Tibial artery (tissue), 4 donors: ENCODE measurements at regions of chr2 and their contacts with region 1.

Region 1: DNA sequence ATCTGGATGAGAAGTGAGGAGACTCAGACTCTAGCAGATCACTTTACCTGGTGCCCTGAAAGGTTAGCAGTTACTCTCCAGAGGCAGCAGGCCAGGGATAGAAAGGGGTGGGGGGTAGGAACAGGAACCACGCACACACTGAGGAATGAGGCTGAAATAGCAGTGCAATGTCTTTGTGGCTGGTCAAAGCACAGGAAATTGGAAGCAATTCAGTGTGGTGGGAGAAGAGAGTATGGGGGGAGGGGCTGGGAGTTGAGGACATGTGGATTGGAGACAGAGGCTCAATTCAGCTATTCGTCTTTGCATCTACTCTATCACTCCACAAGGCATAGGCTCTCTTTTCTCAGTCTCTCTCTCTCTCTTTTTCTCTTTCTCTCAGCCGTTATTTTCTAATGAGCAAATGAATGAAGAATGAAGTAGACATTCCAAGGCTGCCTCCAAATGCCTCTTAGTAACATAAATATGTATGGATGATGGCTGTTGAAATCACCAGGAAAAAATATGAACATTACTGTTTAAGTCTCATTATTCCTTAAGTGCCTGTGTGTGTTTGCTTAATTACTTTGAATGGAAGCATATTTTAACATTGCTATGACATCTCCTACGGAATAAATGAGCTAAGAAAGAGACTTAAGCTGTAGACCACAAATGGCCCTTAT is 979.4 kb downstream of the TSN start:
- DNase-seq: no peak
- H3K4me3 ChIP-seq: no peak overlapping the region
- H3K27ac ChIP-seq: no peak overlapping the region
- H3K4me1 ChIP-seq: no peaks in the 10 kb centered on the region
- H3K27me3 ChIP-seq: no peaks in the 10 kb centered on the region
- CTCF ChIP-seq: no peak

Region 2: DNA sequence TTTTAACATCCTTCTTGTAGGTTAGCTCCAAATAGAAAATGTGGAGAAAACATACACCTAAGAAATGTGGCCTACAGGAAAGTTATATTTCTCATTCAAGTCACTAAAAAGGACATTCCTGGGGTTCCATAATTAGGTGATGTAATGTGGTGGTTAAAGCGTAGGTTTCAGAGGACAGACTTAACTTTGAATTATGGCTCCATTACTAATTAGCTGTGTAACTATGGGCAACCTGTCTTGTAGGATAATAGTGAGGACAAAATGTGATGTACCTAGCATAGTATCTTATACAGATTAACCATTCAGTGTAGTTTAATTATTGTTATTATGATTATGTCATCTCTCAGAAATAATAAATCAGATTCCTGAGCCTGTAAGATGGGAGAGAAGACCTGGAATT is 376.9 kb before region 1 on chr2:
- intact Hi-C with region 1: loop called (anchors 5 kb)
- DNase-seq: no peak
- H3K4me3 ChIP-seq: no peak overlapping the region
- H3K27ac ChIP-seq: no peak overlapping the region
- H3K4me1 ChIP-seq: no peaks in the 10 kb centered on the region
- H3K27me3 ChIP-seq: no peaks in the 10 kb centered on the region
- CTCF ChIP-seq: no peak

Region 3: DNA sequence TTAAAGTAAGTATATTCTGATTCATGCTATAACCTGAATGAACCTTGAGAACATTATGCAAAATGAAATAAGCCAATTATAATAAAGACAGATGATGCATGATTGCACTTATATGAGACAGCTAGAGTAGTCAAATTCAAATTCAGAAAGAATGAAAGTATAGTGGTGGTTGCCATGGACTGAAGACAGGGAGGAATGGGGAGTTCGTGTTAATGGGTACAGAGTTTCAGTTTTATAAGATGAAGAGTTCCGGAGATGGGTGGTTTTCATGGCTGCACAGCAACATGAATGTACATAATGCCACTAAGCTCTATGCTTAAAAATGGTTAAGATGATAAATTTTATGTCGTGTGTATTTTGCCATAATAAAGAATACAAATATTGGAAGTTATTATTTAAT is 228.3 kb before region 1 on chr2:
- intact Hi-C with region 1: no loop called
- DNase-seq: no peak
- H3K4me3 ChIP-seq: no peak overlapping the region
- H3K27ac ChIP-seq: no peak overlapping the region
- H3K4me1 ChIP-seq: no peaks in the 10 kb centered on the region
- H3K27me3 ChIP-seq: no peaks in the 10 kb centered on the region
- CTCF ChIP-seq: no peak

Region 4: GRCh38 chr2:122596598-122596997 is 138.3 kb before region 1 on chr2:
- intact Hi-C with region 1: no loop called
- DNase-seq: no peak
- H3K4me3 ChIP-seq: no peak overlapping the region
- H3K27ac ChIP-seq: no peak overlapping the region
- H3K4me1 ChIP-seq: no peaks in the 10 kb centered on the region
- H3K27me3 ChIP-seq: no peaks in the 10 kb centered on the region
- CTCF ChIP-seq: no peak

Region 5: DNA sequence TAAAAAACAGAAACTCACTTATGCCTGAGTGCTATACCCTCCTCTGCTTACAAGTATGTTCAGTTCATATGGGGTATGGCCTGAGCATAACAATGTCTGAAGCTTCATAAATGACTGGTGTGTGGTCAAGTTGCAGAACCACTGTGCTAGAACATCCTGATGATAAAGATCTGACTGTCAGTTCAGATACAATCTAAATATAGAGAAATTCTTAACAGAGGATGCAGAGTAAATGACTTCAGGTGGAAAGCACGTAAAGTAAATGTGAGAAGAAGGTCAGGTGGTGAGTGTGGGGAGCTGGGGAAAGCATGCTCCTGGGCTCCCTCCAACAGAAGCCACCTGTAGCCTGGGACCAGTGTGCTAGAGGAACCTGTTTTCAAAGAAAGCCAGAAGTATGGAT is 53.3 kb before region 1 on chr2:
- intact Hi-C with region 1: no loop called
- DNase-seq: no peak
- H3K4me3 ChIP-seq: no peak overlapping the region
- H3K27ac ChIP-seq: no peak overlapping the region
- H3K4me1 ChIP-seq: no peaks in the 10 kb centered on the region
- H3K27me3 ChIP-seq: no peaks in the 10 kb centered on the region
- CTCF ChIP-seq: no peak